ENCODE measurements at regions of chr1 and their contacts with region 1.

Region 1: DNA sequence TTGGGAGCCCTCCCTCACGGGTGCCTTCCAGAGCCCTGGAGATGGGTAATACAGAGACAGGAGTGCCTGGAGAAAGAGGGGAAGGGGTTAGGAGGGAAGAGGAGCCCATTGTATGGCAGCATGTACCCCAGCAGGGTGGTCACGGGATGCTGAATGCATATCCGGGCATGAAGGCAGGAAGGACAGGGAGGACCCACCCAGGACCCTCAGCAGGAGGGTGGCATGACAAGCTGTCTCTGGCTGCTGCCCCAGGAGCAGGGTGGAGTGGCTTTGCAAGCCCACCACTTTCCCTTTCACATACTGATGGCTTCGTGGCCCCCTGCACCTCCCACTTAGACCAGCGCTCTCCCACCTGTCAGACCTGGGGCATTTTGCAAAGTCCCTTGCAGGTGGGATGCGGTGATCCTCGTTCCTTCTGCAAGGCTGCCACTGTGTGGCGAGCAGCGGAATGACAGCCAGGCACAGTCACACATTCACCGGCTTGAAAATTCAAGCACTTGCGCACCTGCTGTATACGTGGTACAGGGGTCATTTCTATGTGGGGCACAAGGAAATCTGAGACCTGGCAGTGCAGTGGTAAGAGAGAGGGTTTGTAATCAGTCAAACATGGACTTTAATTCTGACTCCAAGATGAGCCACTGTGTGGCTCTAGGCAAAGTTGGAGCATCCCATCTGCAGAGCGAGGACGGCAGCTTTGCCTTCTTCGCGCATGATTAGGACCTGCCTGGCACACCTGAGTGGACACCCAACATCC is 53.2 kb upstream of the TMEM51 start:
- DNase-seq: peak; percentile 23 to 41
- ATAC-seq: peak in 7 of 8 donors; percentile 14 to 68 (median 53)
- H3K4me3 ChIP-seq: no peak overlapping the region
- H3K27ac ChIP-seq: no peak overlapping the region
- H3K4me1 ChIP-seq: no peaks in the 10 kb centered on the region
- H3K27me3 ChIP-seq: peaks cover 0 to 32% (median 15%) of the 10 kb centered on the region in 7 donors
- CTCF ChIP-seq: peak; percentile 73 to 90 (median 84)

Region 2: GRCh38 chr1:13965770-13966398 is 1134.4 kb before region 1 on chr1:
- intact Hi-C with region 1: loop called in 1 of 10 experiments (anchors 5 kb)
- DNase-seq: peak; percentile 34 to 41
- ATAC-seq: peak; percentile 57 to 88 (median 70)
- H3K4me3 ChIP-seq: no peak overlapping the region
- H3K27ac ChIP-seq: no peak overlapping the region
- H3K4me1 ChIP-seq: no peaks in the 10 kb centered on the region
- H3K27me3 ChIP-seq: peaks cover 0 to 55% (median 18%) of the 10 kb centered on the region in 7 donors
- CTCF ChIP-seq: peak in 8 of 9 donors; percentile 21 to 59 (median 50)

Region 3: GRCh38 chr1:15028102-15028501 is 72.2 kb before region 1 on chr1:
- intact Hi-C with region 1: no loop called
- DNase-seq: peak; percentile 23 to 33
- ATAC-seq: peak in 7 of 8 donors; percentile 28 to 70 (median 60)
- H3K4me3 ChIP-seq: no peak overlapping the region
- H3K27ac ChIP-seq: no peak overlapping the region
- H3K4me1 ChIP-seq: peaks cover 0 to 8% (median 0%) of the 10 kb centered on the region in 9 donors
- H3K27me3 ChIP-seq: no peaks in the 10 kb centered on the region
- CTCF ChIP-seq: no peak

Measured in heart right ventricle (tissue), 16 donors.